ENCODE measurements at regions of chr2 and their contacts with region 1.

Region 1: DNA sequence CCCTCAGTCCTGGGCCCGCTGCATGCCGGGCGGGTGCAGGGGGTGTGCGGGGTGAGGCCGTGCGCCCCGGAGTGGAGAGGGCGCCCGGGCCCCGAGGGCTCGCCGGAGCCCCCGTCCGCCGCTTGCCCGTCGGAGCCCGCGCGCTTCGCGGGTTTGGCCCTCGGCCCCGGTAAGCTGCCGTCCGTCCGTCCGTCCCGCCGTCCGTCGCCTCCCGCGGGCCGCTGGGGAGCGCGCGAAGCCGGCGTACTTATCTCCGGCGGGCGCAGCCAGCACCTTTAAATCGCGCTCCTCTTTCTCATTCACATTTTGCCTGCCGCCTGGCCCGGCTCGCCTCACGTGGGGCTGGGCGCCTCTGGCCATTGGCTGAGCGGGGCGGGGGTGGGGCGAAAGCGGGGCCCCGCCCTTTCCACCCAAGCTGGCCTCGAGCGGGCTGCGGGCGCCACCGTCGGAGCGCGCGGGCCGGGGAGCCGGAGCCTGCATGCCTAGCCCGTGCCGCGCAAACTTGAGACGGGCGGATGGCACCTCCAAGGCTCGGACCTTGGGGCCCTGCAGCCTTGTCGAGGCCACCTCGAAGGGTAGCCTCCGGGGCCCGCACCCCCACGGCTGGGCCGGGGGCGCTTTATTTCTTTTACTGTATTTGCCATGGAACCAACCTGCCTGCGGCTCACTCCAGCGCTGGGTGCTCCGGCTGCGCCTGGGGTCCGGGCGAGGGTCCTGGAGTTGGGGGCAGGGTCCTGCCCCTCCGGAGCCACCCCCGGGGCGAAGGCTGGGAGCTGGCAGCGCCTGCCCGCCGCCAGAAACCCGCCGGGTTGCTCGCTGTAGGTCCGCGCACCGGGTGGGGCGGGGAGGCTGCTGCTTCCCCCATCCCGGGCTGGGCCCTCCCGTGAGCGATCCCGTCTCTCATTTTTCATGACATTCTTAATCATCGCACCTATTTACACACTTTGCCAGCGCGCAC is at the start of gene GBX2:
- DNase-seq: peak; percentile 92
- H3K4me3 ChIP-seq: peak within 1 kb of the TSS; percentile 59 to 73 (median 68)
- H3K27ac ChIP-seq: peak within 1 kb of the TSS; percentile 11
- H3K4me1 ChIP-seq: peaks cover 25% of the 10 kb centered on the region
- H3K27me3 ChIP-seq: peaks cover 3 to 48% of the 10 kb centered on the region in 2 experiments
- CTCF ChIP-seq: no peak
- POLR2A ChIP-seq: peak; percentile 77
- total RNA-seq, gene GBX2: 3.6 TPM in 2 replicates

Region 2: GRCh38 chr2:236107942-236108625 is 60.3 kb before region 1 on chr2:
- CTCF ChIA-PET with region 1: no interaction called
- POLR2A ChIA-PET with region 1: no interaction called
- dilution Hi-C with region 1: no loop called
- intact Hi-C with region 1: loop called (anchors 2 kb)
- DNase-seq: peak; percentile 58
- H3K4me3 ChIP-seq: no peak overlapping the region
- H3K27ac ChIP-seq: peak overlapping the region; percentile 28
- H3K4me1 ChIP-seq: peaks cover 28% of the 10 kb centered on the region
- H3K27me3 ChIP-seq: no peaks in the 10 kb centered on the region
- CTCF ChIP-seq: no peak
- POLR2A ChIP-seq: no peak

Region 3: DNA sequence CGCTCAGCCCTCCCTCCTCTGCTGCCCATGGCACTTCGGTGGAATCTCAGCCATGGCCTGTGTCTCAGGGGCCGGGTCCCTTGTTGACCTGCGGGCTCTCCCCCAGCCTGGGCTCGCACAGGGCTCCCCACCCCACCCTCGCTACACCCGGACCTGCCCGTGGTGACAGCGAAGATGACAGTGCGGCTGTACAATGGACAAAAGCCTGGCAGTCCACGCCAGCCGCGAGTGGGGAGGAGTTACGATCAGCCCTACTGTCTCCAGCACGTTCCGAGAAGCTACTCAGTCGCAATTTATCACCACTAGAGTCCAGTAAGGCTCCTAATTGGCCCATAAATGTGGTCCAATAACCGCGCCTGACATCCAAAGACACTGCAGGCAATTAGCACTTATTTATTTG is 31.9 kb before region 1 on chr2:
- CTCF ChIA-PET with region 1: no interaction called
- POLR2A ChIA-PET with region 1: no interaction called
- dilution Hi-C with region 1: no loop called
- intact Hi-C with region 1: no loop called
- DNase-seq: no peak
- H3K4me3 ChIP-seq: no peak overlapping the region
- H3K27ac ChIP-seq: no peak overlapping the region
- H3K4me1 ChIP-seq: no peaks in the 10 kb centered on the region
- H3K27me3 ChIP-seq: no peaks in the 10 kb centered on the region
- CTCF ChIP-seq: no peak
- POLR2A ChIP-seq: no peak

Measured in endothelial cell of umbilical vein (primary cell).